CD4-positive, alpha-beta memory T cell (primary cell): ENCODE measurements at regions of chr6 and their contacts with region 1.

Region 1: DNA sequence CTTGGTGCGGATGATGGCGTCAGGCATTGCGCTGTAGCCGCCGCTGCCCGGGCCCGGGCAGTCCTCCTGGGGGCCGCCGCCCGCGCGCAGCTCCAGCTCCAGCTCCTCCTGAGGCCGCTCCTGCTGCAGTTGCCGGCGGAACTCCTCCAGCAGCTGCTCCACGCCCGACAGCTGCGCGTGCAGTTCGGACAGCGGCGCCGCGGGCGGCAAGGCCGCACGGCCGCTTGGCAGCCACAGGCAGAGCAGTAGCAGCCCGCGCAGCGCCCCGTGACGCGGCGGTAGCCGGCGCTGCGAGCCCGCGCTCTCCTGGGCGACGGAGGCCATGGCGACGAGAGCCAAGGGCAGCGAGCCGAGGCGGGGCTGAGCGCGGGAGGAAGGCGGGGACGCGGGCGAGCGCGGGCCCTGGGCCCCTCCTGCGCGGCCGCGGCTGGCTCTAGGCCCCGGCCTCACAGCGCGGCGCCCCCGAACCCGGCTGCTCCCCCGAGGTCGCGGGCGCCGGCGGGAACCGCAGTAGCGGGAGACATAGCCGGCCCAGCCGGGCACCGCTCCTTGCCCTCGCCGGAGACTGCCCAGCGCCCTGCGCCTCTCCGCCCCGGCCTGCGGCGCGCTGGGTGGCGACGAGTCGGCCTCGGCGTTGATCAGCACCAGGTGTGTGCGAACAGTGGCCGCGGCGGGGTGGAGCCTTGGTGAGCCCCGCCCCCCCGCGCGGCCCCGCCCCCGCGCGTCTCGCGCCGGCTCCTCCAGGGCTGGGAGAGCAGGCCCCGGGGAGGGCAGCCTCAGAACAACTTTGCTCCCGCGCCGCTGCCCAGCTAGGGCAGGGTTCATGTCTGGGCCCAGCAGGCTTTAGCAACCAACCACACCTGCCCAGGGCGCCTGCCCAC is at the start of gene LRP11:
- DNase-seq: peak; percentile 80 to 89 (median 85)
- H3K4me3 ChIP-seq: peak within 1 kb of the TSS; percentile 20 to 73
- H3K4me3 Mint-ChIP-seq: peak within 1 kb of the TSS; percentile 77 to 93 (median 84)
- H3K27ac ChIP-seq: peak within 1 kb of the TSS; percentile 29
- H3K27ac Mint-ChIP-seq: peak within 1 kb of the TSS; percentile 29 to 92 (median 79)
- H3K4me1 ChIP-seq: peaks cover 13% of the 10 kb centered on the region
- H3K4me1 Mint-ChIP-seq: peaks cover 3 to 23% (median 10%) of the 10 kb centered on the region in 4 donors
- H3K27me3 ChIP-seq: no peaks in the 10 kb centered on the region
- H3K27me3 Mint-ChIP-seq: peaks cover 0 to 5% of the 10 kb centered on the region in 2 donors
- total RNA-seq, gene LRP11: 3.6 to 5.6 TPM

Region 2: GRCh38 chr6:149723771-149724417 is 140.0 kb before region 1 on chr6:
- CTCF ChIA-PET with region 1: no interaction called
- POLR2A ChIA-PET with region 1: interaction called, 3 read pairs
- intact Hi-C with region 1: loop called (anchors 1 kb)
- DNase-seq: peak; percentile 34 to 54 (median 42)
- H3K4me3 ChIP-seq: no peak overlapping the region
- H3K4me3 Mint-ChIP-seq: no peak overlapping the region
- H3K27ac ChIP-seq: no peak overlapping the region
- H3K27ac Mint-ChIP-seq: peak overlapping the region in 3 of 7 donors; percentile 8 to 52 (median 13)
- H3K4me1 ChIP-seq: peaks cover 19% of the 10 kb centered on the region
- H3K4me1 Mint-ChIP-seq: peaks cover 15 to 22% (median 15%) of the 10 kb centered on the region in 4 donors
- H3K27me3 ChIP-seq: no peaks in the 10 kb centered on the region
- H3K27me3 Mint-ChIP-seq: no peaks in the 10 kb centered on the region

Region 3: DNA sequence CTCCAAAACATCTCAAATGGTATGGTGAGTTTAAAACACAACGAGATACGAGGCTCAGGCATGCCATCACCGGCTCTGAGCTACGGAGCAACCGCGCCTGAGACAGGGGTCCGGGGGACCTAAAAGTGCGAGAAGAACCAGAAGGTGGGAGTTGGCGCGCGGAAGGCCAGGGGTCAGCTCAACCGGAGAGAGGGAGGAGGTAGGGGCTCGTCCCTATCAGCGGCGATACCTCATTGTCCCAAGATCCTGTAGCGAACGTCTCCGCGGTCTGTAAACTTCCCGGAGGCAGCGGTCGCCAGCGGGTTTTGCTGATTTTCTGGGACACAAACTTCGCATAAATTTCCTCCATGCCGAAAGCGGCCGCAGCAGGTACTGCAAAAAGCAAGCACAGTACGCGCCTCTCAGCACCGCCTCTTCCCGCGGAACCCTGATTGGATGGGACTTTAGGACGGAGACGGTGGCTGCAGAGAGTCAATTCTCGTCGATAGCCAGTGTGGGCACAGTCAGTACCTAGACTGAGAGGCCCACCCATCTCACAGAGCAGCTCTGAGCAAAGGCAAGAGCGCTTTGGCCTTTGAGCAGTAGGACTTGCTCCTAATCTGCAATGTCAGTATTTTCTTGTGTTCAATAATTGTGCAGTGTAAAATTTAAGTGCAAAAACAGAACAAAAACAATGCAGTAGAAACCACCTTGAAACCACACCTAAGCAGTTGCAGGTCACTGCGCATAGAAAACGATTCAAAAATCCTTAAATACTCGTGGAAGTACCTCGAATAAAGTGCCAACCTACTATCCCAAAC is 117.6 kb before region 1 on chr6 and contains the start of gene NUP43:
- CTCF ChIA-PET with region 1: no interaction called
- POLR2A ChIA-PET with region 1: no interaction called
- intact Hi-C with region 1: loop called (anchors 1 kb)
- DNase-seq: peak; percentile 89 to 92 (median 89)
- H3K4me3 ChIP-seq: peak within 1 kb of the TSS; percentile 87 to 90
- H3K4me3 Mint-ChIP-seq: peak within 1 kb of the TSS; percentile 92 to 99 (median 97)
- H3K27ac ChIP-seq: peak within 1 kb of the TSS; percentile 78
- H3K27ac Mint-ChIP-seq: peak within 1 kb of the TSS; percentile 88 to 97 (median 94)
- H3K4me1 ChIP-seq: peaks cover 36% of the 10 kb centered on the region
- H3K4me1 Mint-ChIP-seq: peaks cover 18 to 47% (median 31%) of the 10 kb centered on the region in 4 donors
- H3K27me3 ChIP-seq: no peaks in the 10 kb centered on the region
- H3K27me3 Mint-ChIP-seq: no peaks in the 10 kb centered on the region
- total RNA-seq, gene NUP43: 56.0 to 58.3 TPM

Region 4: GRCh38 chr6:149840345-149841075 is 23.4 kb before region 1 on chr6:
- CTCF ChIA-PET with region 1: interaction called, 12 read pairs
- POLR2A ChIA-PET with region 1: no interaction called
- intact Hi-C with region 1: loop called (anchors 1 kb)
- DNase-seq: peak in 3 of 5 donors; percentile 11 to 15 (median 14)
- H3K4me3 ChIP-seq: no peak overlapping the region
- H3K4me3 Mint-ChIP-seq: no peak overlapping the region
- H3K27ac ChIP-seq: no peak overlapping the region
- H3K27ac Mint-ChIP-seq: peak overlapping the region in 1 of 7 donors; percentile 19
- H3K4me1 ChIP-seq: no peaks in the 10 kb centered on the region
- H3K4me1 Mint-ChIP-seq: no peaks in the 10 kb centered on the region
- H3K27me3 ChIP-seq: no peaks in the 10 kb centered on the region
- H3K27me3 Mint-ChIP-seq: peaks cover 0 to 2% of the 10 kb centered on the region in 2 donors

Region 5: GRCh38 chr6:149925974-149926777 is 62.2 kb after region 1 on chr6:
- CTCF ChIA-PET with region 1: no interaction called
- POLR2A ChIA-PET with region 1: no interaction called
- intact Hi-C with region 1: loop called (anchors 2 kb)
- DNase-seq: peak; percentile 59 to 70 (median 63)
- H3K4me3 ChIP-seq: no peak overlapping the region
- H3K4me3 Mint-ChIP-seq: peak overlapping the region; percentile 14 to 60 (median 28)
- H3K27ac ChIP-seq: no peak overlapping the region
- H3K27ac Mint-ChIP-seq: peak overlapping the region in 1 of 7 donors; percentile 5
- H3K4me1 ChIP-seq: peaks cover 29% of the 10 kb centered on the region
- H3K4me1 Mint-ChIP-seq: peaks cover 11 to 38% (median 21%) of the 10 kb centered on the region in 4 donors
- H3K27me3 ChIP-seq: peaks cover 47% of the 10 kb centered on the region
- H3K27me3 Mint-ChIP-seq: peaks cover 73 to 82% of the 10 kb centered on the region in 2 donors